Esophagus squamous epithelium (tissue), 5 donors: ENCODE measurements at regions of chr12 and their contacts with region 1.

Region 1: DNA sequence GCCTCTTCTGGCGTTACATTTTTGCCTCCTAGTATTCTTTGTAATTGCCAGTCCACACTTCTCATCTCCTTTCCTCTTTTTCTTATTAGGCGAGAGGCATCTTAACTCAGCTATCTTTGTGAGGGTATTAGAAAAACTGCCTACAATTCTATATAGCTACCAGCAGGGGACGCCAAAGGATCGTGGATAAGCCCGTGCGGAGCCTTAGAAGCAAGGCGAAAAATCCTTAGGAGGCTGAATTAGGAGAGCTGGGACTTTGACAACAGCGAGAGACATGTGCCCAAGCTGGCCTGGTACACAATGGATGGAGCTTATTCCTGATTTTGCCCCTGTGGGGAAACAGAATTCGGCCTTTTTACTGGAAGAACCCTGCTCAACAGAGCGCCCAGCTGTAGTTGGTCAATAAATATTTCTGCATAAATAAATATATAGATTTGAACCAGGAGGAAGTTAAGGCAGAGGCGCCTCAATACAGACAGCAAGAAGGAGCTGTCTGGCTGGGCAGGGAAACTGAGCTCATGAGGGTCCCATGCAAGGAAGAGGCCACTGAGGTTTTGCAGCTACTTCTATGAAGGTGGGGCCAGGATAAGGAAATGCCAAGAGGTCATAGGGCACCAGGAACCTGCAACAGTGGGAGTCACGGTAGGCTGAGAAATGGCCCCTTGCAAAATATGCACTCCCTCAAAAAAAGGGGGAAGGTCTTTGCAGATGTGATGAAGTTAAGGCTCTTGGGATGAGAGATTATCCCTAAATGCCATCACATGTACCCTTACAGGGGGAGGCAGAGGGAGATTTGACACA is 14.6 kb upstream of the RBM19 start:
- DNase-seq: no peak
- H3K4me3 ChIP-seq: no peak overlapping the region
- H3K27ac ChIP-seq: no peak overlapping the region
- H3K4me1 ChIP-seq: no peaks in the 10 kb centered on the region
- H3K27me3 ChIP-seq: peaks cover 0 to 67% (median 0%) of the 10 kb centered on the region in 4 donors
- CTCF ChIP-seq: peak; percentile 43 to 94 (median 92)
- POLR2A ChIP-seq: no peak

Region 2: DNA sequence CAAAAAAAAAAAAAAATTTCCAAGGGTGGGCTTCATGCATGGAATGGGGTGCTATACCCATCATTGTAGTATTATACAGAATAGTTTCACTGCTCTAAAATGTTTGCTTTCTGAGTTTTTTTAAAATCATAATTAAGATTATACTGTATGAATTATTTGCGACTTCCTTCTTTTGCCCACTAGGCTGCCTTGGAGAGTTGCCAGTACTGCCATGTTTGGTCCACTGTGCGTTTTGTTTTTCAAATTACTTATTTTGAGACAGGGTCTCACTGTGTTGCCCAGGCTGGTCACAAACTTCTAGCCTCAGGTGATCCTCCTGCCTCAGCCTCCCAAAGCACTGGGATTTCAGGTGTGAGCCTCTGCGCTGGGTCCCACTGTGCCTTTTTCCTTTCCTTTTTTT is 602.4 kb before region 1 on chr12:
- intact Hi-C with region 1: no loop called
- DNase-seq: no peak
- H3K4me3 ChIP-seq: no peak overlapping the region
- H3K27ac ChIP-seq: no peak overlapping the region
- H3K4me1 ChIP-seq: no peaks in the 10 kb centered on the region
- H3K27me3 ChIP-seq: no peaks in the 10 kb centered on the region
- CTCF ChIP-seq: no peak
- POLR2A ChIP-seq: no peak

Region 3: DNA sequence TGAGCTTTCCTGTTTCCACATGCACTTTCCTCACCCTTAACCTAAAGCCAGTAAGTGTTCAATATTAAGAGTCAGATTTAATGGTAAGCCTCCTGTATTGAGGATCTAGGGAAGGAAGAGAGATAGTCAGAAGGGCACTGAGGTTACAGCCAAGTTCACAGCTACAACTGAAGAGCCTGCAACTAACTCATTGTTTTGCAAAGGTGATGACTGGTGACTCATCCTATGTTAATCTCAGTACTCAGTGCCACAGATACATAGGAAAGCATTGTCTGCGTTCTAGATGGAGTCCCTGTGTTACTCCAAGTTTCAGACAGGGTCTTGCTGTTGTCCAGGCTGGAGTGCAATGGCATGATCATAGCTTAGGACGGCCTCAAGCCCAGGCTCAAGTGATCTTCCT is 142.4 kb after region 1 on chr12:
- intact Hi-C with region 1: no loop called
- DNase-seq: no peak
- H3K4me3 ChIP-seq: no peak overlapping the region
- H3K27ac ChIP-seq: no peak overlapping the region
- H3K4me1 ChIP-seq: no peaks in the 10 kb centered on the region
- H3K27me3 ChIP-seq: no peaks in the 10 kb centered on the region
- CTCF ChIP-seq: no peak
- POLR2A ChIP-seq: no peak

Region 4: DNA sequence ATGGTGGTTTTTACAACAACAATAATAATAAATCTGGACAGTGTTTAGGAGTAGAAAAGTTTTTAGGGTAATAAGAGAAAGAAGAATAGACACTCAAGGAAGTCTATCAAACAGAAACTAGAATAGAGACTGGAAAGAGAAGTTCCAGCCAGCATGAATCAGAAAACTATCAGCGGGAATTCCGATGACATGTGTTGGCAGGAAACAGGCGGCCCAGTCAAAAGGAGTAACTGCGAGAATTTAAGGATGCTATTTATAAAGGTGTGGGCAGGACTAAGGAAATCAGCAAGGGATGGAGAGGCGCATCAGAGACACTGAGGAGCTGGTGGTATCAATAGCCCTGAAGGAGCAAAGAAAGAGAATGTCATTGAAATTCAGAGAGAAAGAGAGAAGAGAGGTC is 335.3 kb after region 1 on chr12:
- intact Hi-C with region 1: no loop called
- DNase-seq: no peak
- H3K4me3 ChIP-seq: no peak overlapping the region
- H3K27ac ChIP-seq: no peak overlapping the region
- H3K4me1 ChIP-seq: no peaks in the 10 kb centered on the region
- H3K27me3 ChIP-seq: no peaks in the 10 kb centered on the region
- CTCF ChIP-seq: no peak
- POLR2A ChIP-seq: no peak

Region 5: DNA sequence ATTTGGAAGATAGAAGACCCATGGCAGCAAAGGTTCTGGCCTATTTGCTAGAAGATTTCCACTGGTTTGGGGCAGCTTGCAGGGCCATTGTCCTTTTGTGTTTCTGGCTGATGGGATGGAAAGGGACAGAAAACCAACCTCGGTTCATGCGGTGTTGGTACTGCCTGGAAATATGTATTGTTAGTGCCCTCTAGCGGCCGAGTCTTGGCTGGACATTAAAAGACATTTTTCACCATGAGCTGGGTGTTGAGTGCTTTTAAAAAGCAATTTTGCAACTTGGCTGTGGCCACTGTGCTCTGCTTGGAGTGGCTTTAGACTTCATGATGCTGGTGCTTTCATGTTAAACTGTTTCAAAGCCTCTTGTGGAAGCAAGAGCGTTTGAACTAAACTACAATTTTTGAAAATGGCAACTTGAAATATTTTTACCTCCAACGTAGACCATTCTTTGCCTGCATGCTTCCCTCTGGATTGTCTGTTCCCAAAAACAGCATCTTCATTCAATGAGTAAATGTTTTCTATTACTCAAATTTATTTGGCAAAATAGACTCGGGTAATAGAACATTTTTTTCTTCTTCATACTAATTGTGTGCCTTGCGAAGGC is 527.9 kb after region 1 on chr12:
- intact Hi-C with region 1: loop called (anchors 5 kb)
- DNase-seq: no peak
- H3K4me3 ChIP-seq: no peak overlapping the region
- H3K27ac ChIP-seq: no peak overlapping the region
- H3K4me1 ChIP-seq: no peaks in the 10 kb centered on the region
- H3K27me3 ChIP-seq: peaks cover 0 to 35% (median 0%) of the 10 kb centered on the region in 4 donors
- CTCF ChIP-seq: peak; percentile 38 to 73 (median 62)
- POLR2A ChIP-seq: no peak